A673 (cell line): ENCODE measurements at regions of chr15 and their contacts with region 1.

Region 1: GRCh38 chr15:75493732-75494131 is 42.2 kb upstream of the SIN3A start:
- DNase-seq: no peak
- H3K4me3 ChIP-seq: no peak overlapping the region
- H3K27ac ChIP-seq: no peak overlapping the region
- H3K4me1 ChIP-seq: no peaks in the 10 kb centered on the region
- H3K27me3 ChIP-seq: no peaks in the 10 kb centered on the region
- CTCF ChIP-seq: no peak

Region 2: GRCh38 chr15:75460646-75461045 is 33.1 kb before region 1 on chr15:
- CTCF ChIA-PET with region 1: no interaction called
- POLR2A ChIA-PET with region 1: interaction called, 12 read pairs
- intact Hi-C with region 1: no loop called
- DNase-seq: no peak
- H3K4me3 ChIP-seq: no peak overlapping the region
- H3K27ac ChIP-seq: no peak overlapping the region
- H3K4me1 ChIP-seq: no peaks in the 10 kb centered on the region
- H3K27me3 ChIP-seq: no peaks in the 10 kb centered on the region
- CTCF ChIP-seq: no peak